ENCODE measurements at regions of chr11 and their contacts with region 1.

Region 1: GRCh38 chr11:68206187-68206601 is 6.9 kb downstream of the KMT5B start:
- DNase-seq: no peak
- ATAC-seq: peak; percentile 59
- H3K4me3 Mint-ChIP-seq: no peak overlapping the region
- H3K27ac Mint-ChIP-seq: no peak overlapping the region
- H3K4me1 Mint-ChIP-seq: peaks cover 25% of the 10 kb centered on the region
- H3K27me3 Mint-ChIP-seq: no peaks in the 10 kb centered on the region

Region 2: DNA sequence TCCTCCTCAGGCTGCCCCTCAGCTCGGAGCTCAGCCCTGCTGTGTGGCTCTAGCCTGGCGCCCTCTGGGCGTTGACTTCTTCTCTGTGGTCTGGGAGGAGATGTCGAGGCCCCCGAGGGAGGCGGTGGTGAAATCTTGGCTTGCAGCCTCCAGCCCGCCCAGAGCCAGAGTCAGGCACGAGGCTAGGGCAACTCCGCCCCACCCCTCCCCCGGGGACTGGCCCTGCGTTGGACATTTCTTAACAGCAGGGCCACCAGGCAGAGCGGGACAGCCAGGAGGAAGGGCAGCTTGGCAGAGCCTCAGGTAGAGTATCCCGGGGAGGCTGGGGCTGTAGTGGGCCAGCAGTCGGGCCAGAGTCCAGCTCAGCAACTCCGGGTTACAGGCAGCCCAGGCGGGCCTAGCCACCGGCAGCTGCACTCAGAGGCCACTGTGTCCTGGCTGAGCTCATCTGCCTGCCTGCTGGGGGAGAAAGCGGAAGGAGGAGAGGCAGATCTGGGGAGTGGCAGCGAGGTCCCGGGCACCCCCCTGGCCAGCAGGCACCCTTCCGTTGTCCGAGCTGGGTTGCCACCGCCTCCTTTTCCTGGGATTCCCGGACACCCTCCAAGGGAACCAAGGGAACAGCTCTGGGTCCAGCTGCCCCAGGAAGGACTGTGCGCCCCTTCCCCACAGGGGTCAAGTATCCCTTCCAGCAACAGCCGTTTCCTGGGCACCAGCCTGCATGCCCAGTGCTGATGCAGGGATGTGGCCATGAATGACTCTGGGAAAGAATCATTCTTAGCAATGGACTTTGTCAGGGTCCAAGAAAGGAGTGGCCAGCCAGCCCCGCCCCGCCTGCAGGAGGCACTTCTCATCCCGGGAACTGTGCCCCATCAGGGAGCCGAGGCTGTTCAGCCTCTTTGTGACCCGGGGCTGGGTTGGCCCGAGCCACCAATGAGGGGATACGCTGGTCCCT is 195.8 kb before region 1 on chr11 and contains the start of gene ALDH3B1:
- CTCF ChIA-PET with region 1: interaction called, 20 read pairs
- DNase-seq: no peak
- ATAC-seq: peak; percentile 38
- H3K4me3 Mint-ChIP-seq: no peak within 1 kb of the TSS
- H3K27ac Mint-ChIP-seq: no peak within 1 kb of the TSS
- H3K4me1 Mint-ChIP-seq: peaks cover 11% of the 10 kb centered on the region
- H3K27me3 Mint-ChIP-seq: no peaks in the 10 kb centered on the region
- total RNA-seq, gene ALDH3B1: not detected

Measured in activated CD8-positive, alpha-beta memory T cell treated with anti-CD3 and anti-CD28 coated beads, Interleukin-2, amount 10 ng/mL, durations not matched to agents 7 days and 5 days (primary cell).